Caco-2 (cell line): ENCODE measurements at regions of chr1 and their contacts with region 1.

Region 1: GRCh38 chr1:54764133-54764921 is at the start of gene PARS2:
- DNase-seq: peak; percentile 94 to 95
- H3K4me3 ChIP-seq: peak within 1 kb of the TSS; percentile 60
- H3K4me3 Mint-ChIP-seq: peak within 1 kb of the TSS; percentile 88
- H3K27ac Mint-ChIP-seq: peak within 1 kb of the TSS; percentile 93
- H3K4me1 ChIP-seq: no peaks in the 10 kb centered on the region
- H3K4me1 Mint-ChIP-seq: peaks cover 7% of the 10 kb centered on the region
- H3K27me3 ChIP-seq: no peaks in the 10 kb centered on the region
- H3K27me3 Mint-ChIP-seq: no peaks in the 10 kb centered on the region
- CTCF ChIP-seq: no peak
- total RNA-seq, gene PARS2: 5.8 and 6.5 TPM in 2 replicates

Region 2: GRCh38 chr1:54715493-54716298 is 48.6 kb before region 1 on chr1 and contains the start of gene TTC4:
- CTCF ChIA-PET with region 1: no interaction called
- POLR2A ChIA-PET with region 1: no interaction called
- intact Hi-C with region 1: loop called (anchors 5 kb)
- DNase-seq: peak; percentile 64 to 84
- H3K4me3 ChIP-seq: peak within 1 kb of the TSS; percentile 75
- H3K4me3 Mint-ChIP-seq: peak within 1 kb of the TSS; percentile 74
- H3K27ac Mint-ChIP-seq: peak within 1 kb of the TSS; percentile 54
- H3K4me1 ChIP-seq: no peaks in the 10 kb centered on the region
- H3K4me1 Mint-ChIP-seq: peaks cover 8% of the 10 kb centered on the region
- H3K27me3 ChIP-seq: no peaks in the 10 kb centered on the region
- H3K27me3 Mint-ChIP-seq: no peaks in the 10 kb centered on the region
- CTCF ChIP-seq: no peak
- total RNA-seq, gene TTC4: 14.0 and 14.8 TPM in 2 replicates

Region 3: GRCh38 chr1:54800899-54801759 is 36.8 kb after region 1 on chr1 and contains the start of gene TTC22:
- CTCF ChIA-PET with region 1: interaction called, 18 read pairs
- POLR2A ChIA-PET with region 1: interaction called, 3 read pairs
- intact Hi-C with region 1: loop called (anchors 2 kb)
- DNase-seq: peak; percentile 79 to 85
- H3K4me3 ChIP-seq: peak within 1 kb of the TSS; percentile 66
- H3K4me3 Mint-ChIP-seq: peak within 1 kb of the TSS; percentile 88
- H3K27ac Mint-ChIP-seq: peak within 1 kb of the TSS; percentile 37
- H3K4me1 ChIP-seq: peaks cover 9% of the 10 kb centered on the region; the same call in 1 of the 2 replicates
- H3K4me1 Mint-ChIP-seq: peaks cover 31% of the 10 kb centered on the region
- H3K27me3 ChIP-seq: no peaks in the 10 kb centered on the region
- H3K27me3 Mint-ChIP-seq: no peaks in the 10 kb centered on the region
- CTCF ChIP-seq: peak; percentile 29 to 61
- total RNA-seq, gene TTC22: 8.8 and 9.9 TPM in 2 replicates

Region 4: GRCh38 chr1:54810100-54810942 is 46.0 kb after region 1 on chr1:
- CTCF ChIA-PET with region 1: no interaction called
- POLR2A ChIA-PET with region 1: no interaction called
- intact Hi-C with region 1: loop called (anchors 1 kb)
- DNase-seq: peak; percentile 56 to 75
- H3K4me3 ChIP-seq: no peak overlapping the region
- H3K4me3 Mint-ChIP-seq: no peak overlapping the region
- H3K27ac Mint-ChIP-seq: no peak overlapping the region
- H3K4me1 ChIP-seq: no peaks in the 10 kb centered on the region
- H3K4me1 Mint-ChIP-seq: peaks cover 2% of the 10 kb centered on the region
- H3K27me3 ChIP-seq: no peaks in the 10 kb centered on the region
- H3K27me3 Mint-ChIP-seq: no peaks in the 10 kb centered on the region
- CTCF ChIP-seq: peak; percentile 66 to 69